SK-N-SH (cell line): ENCODE measurements at regions of chr12 and their contacts with region 1.

Region 1: DNA sequence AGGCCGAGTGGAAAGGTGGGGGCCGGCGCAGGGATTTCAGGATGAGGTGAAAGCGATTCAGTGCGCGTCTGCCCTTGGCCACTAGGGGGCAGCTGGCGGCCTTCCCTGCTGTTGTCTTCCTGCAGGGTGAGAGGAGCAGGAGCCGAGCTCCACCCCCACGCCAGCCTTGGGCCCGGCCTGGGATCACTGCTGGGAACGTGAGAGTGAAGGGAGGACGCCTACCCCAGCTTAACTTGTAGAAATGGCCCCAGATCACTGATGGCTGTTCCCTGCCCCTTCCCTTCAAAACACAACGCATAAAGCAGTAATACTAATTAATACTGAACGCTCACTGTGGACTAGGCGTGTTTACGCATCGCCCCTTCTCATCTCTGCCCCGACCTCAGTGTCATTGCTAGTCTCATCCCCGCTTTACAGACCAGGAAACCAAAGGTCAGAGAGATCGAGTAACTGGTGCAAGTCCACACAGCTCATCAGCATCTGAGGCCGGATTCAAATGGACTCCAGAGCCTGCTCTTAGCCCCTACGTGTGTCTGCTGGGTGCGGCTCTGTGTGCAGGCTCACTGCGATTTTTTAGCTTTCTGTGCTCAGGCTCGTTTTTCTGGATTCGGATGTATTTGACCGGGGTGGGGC is 24.3 kb downstream of the MVK start:
- DNase-seq: peak; percentile 94
- H3K4me3 ChIP-seq: peak overlapping the region; percentile 6 to 51; a peak in 1 of 4 replicates
- H3K27ac ChIP-seq: peak overlapping the region in 1 of 2 experiments; percentile 75; a peak in 2 of 4 replicates
- H3K4me1 ChIP-seq: peaks cover 0 to 29% of the 10 kb centered on the region in 2 experiments; a peak in 2 of 4 replicates
- H3K27me3 ChIP-seq: no peaks in the 10 kb centered on the region
- CTCF ChIP-seq: peak; percentile 96
- EP300 ChIP-seq: no peak
- RAD21 ChIP-seq: peak; percentile 91

Region 2: DNA sequence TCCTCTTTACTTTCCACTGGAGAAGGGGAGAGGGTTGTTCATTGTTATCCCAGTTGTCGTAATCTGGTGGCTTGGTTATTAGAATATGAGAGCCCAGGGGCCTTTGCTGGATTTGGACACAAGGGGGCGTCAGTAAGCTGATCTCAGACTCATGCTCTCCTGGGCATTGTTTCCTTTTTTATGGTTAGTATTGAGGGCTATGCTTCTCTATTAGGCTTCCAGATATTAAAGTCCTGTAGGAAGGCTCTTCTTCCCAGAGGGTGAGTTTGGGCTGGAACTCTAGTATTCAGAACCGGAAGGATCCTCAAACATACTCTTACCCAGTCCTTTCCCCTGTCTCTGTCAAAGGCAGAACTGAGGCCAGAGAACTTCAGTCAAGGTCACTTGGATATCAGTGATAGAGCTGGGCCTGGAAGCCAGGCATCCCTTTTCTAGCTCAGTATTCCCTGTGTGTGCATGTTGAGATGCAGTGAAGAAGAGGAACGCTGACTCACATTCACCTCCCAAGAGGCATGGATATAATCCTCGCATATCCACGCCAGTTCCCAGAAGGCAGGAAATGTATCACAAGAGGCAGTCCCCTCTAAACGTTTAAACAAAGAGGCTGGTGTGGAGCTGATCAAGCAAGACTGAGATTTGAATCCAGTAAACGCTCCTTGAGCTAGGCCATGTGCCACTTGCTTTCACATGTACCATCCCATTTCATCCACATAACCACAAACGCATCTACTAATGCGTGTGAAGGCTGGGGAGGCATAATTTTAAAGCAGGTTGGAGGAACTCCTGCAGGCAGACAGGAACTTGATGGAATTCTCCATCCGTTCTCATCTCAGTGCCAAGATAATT is 78.9 kb before region 1 on chr12:
- CTCF ChIA-PET with region 1: interaction called, 173 read pairs
- POLR2A ChIA-PET with region 1: interaction called, 3 read pairs
- DNase-seq: peak; percentile 81
- H3K4me3 ChIP-seq: peak overlapping the region in 1 of 2 experiments; percentile 26; a peak in 1 of 4 replicates
- H3K27ac ChIP-seq: peak overlapping the region; percentile 57 to 89
- H3K4me1 ChIP-seq: peaks cover 14 to 52% of the 10 kb centered on the region in 2 experiments; a peak in 3 of 4 replicates
- H3K27me3 ChIP-seq: no peaks in the 10 kb centered on the region
- CTCF ChIP-seq: peak; percentile 93
- EP300 ChIP-seq: no peak
- RAD21 ChIP-seq: peak; percentile 96

Region 3: DNA sequence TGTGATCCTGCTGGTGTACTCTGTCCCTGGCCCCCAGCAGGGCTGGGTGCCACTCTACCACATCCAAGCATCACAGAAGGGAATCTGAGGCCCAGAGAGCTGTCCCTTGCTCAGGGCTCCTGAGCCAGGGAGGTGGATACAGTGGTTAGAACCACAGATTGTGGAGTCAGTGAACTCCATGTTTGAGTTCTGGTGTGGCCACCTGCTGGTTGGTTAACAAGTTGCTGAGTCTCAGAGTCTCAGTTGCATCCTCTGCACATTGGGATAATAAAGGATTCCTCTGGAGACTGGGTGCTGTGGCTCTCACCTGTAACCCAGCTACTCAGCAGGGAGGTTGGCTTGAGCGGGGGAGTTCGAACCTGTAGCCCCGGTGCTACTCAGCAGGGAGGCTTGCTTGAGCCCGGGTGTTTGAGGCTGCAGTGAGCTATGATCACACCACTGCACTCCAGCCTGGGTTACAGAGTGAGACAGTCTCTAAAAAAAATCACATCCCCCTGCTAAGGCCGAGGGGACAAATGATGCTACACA is 15.1 kb after region 1 on chr12:
- CTCF ChIA-PET with region 1: interaction called, 33 read pairs
- POLR2A ChIA-PET with region 1: interaction called, 5 read pairs
- DNase-seq: no peak
- H3K4me3 ChIP-seq: no peak overlapping the region
- H3K27ac ChIP-seq: no peak overlapping the region
- H3K4me1 ChIP-seq: peaks cover 0 to 57% of the 10 kb centered on the region in 2 experiments; a peak in 2 of 4 replicates
- H3K27me3 ChIP-seq: peaks cover 8% of the 10 kb centered on the region; the same call in 1 of the 2 replicates
- CTCF ChIP-seq: peak; percentile 41
- EP300 ChIP-seq: no peak
- RAD21 ChIP-seq: peak; percentile 35; the same call in 1 of the 2 replicates

Region 4: GRCh38 chr12:109653890-109654289 is 56.0 kb after region 1 on chr12:
- CTCF ChIA-PET with region 1: interaction called, 23 read pairs
- POLR2A ChIA-PET with region 1: interaction called, 9 read pairs
- DNase-seq: no peak
- H3K4me3 ChIP-seq: no peak overlapping the region
- H3K27ac ChIP-seq: peak overlapping the region in 1 of 2 experiments; percentile 96; a peak in 3 of 4 replicates
- H3K4me1 ChIP-seq: peaks cover 0 to 68% of the 10 kb centered on the region in 2 experiments; a peak in 2 of 4 replicates
- H3K27me3 ChIP-seq: peaks cover 14% of the 10 kb centered on the region; the same call in 1 of the 2 replicates
- CTCF ChIP-seq: no peak
- EP300 ChIP-seq: no peak; a peak in 1 of 4 replicates
- RAD21 ChIP-seq: no peak

Region 5: GRCh38 chr12:109713187-109713984 is 115.5 kb after region 1 on chr12 and contains the start of gene FAM222A:
- CTCF ChIA-PET with region 1: interaction called, 175 read pairs
- POLR2A ChIA-PET with region 1: interaction called, 14 read pairs
- DNase-seq: peak; percentile 97
- H3K4me3 ChIP-seq: peak within 1 kb of the TSS; percentile 62 to 70
- H3K27ac ChIP-seq: peak within 1 kb of the TSS in 1 of 2 experiments; percentile 92; a peak in 2 of 4 replicates
- H3K4me1 ChIP-seq: peaks cover 0 to 39% of the 10 kb centered on the region in 2 experiments; a peak in 1 of 4 replicates
- H3K27me3 ChIP-seq: no peaks in the 10 kb centered on the region; the same call in none of the 2 replicates
- CTCF ChIP-seq: no peak
- EP300 ChIP-seq: no peak
- RAD21 ChIP-seq: no peak
- polyA plus RNA-seq, gene FAM222A: 1.6 and 4.2 TPM in 2 replicates

Region 6: DNA sequence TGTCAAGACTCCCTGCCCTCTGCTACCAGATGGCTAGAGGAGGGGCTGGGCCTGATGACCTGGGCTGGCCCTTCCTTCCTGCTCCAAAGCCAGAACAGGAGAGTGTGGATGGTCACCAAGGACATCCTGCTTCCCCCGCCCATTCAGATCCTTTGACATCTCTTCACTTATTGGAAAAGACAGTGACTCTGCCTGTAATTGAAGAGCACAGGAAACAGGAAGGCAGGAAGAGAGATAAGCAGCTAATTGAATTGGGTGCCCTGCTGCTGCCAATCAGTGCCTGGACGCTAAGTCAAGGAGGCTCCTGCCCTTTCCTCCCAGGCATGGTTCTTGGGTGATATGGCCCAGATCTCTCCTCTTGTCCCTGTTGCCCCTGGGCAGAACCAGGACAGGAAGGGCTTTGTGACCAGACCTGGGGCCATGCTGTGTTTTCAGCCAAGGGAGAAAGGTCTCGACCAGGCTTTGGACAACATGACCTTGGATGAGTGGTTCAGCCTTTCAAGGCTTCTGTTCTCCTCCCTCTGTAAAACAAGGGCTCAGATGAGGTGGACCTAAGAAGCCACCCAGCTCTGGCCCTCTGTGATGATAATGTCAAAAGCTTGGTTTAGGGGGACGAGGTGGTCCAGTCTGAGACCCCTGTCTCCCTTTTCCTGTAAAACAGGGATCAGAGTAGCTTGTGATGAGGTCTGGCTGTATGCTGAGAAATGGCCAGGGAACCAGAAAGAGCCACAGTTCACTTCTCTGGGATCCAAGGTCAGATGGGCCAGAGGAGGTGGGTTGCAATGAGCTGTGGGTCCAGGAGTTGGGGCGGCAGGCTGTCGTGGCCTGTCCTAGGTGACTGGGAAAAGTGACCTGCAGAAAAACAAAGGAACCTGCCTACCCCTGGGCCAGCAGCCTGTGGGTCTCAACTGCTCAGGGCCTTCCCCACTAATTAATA is 154.5 kb after region 1 on chr12:
- CTCF ChIA-PET with region 1: interaction called, 14 read pairs
- POLR2A ChIA-PET with region 1: no interaction called
- DNase-seq: peak; percentile 82
- H3K4me3 ChIP-seq: no peak overlapping the region
- H3K27ac ChIP-seq: peak overlapping the region in 1 of 2 experiments; percentile 98; a peak in 2 of 4 replicates
- H3K4me1 ChIP-seq: peaks cover 0 to 35% of the 10 kb centered on the region in 2 experiments; a peak in 2 of 4 replicates
- H3K27me3 ChIP-seq: no peaks in the 10 kb centered on the region
- CTCF ChIP-seq: no peak
- EP300 ChIP-seq: peak; percentile 54 to 100; a peak in 3 of 4 replicates
- RAD21 ChIP-seq: peak; percentile 32

Region 7: DNA sequence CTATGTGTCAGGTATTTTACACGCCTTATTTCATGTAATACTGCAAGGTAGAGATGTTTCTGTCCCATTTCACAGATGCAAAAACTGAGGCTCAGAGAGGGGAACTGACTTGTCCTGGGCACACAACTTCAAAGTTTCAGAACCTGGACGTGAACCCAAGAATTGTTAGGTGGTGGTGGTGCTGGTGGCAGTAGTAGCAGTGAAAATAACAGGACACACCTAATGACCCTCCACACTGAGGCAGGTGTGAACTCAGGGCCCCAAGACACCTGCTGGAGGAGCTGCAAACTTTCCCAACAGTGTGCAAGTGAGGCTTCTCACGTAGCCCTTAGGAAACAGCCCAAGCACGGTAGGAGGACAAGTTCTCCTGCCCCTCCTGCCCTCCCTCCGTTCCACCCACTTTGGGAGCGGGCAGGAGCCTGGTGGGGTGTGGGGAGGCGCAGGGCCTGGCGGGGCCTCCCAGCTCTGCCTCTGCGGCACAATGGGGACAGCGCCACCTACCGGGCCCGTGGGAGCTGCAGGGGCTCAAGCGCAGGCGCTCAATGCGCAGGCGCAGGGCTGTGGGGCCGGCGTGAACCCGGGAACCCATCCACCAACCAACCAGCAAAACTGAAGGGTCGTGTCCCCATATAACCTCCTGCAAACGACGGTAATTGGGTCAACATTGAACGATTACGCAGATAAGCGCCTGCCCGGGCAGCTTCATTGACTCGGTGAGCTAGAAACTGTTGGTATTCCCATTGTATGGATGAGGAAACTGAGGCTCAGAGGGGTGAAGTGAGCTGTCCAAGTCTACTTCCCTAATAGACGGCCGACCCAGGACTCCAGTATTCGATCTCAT is 247.3 kb after region 1 on chr12:
- CTCF ChIA-PET with region 1: interaction called, 16 read pairs
- POLR2A ChIA-PET with region 1: no interaction called
- DNase-seq: peak; percentile 96
- H3K4me3 ChIP-seq: peak overlapping the region; percentile 35 to 36; a peak in 3 of 4 replicates
- H3K27ac ChIP-seq: no peak overlapping the region
- H3K4me1 ChIP-seq: peaks cover 0 to 3% of the 10 kb centered on the region in 2 experiments; a peak in 1 of 4 replicates
- H3K27me3 ChIP-seq: no peaks in the 10 kb centered on the region
- CTCF ChIP-seq: peak; percentile 98
- EP300 ChIP-seq: no peak
- RAD21 ChIP-seq: peak; percentile 86